B cell (primary cell): ENCODE measurements at regions of chr11 and their contacts with region 1.

Region 1: DNA sequence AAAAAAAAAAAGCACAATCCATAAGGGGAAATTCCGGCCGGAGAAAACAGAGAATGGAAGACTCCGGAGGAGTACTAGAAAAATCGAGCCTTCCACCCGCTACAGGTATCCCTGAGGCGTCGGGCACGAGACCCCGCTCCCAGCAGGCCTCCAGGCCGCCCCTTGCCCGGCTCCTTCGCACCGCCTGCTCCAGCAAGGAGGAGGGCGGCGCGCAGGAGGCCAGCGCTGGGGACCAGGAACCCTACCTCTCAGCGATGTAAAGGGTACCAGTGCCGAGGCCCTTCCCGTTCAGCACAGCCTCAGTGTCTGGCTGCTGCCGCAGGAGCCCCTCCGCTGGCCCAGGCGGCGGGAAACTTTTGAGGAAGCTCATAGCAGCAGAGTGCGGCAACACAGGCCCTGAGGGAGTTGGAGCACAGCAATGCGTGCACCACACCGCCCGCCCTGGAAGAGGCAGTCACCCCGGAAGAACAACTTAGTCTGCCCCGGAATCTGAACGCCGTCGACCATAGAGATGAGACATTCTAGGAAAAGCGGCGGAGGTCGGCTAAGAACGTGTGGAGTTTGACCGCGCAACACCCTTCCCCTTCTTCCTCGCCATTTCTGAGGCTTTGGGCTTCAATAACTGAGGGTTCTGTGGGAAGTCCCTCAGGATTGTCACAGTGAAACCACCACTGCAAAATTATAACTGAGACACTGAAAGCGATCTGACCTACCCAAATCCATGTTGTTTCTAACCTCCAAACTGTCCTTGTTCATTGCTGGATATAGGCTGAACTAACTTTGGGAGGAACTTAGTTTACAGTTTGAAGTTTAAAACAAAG is at the start of gene CLNS1A:
- DNase-seq: peak; percentile 89
- ATAC-seq: peak; percentile 99
- H3K4me3 ChIP-seq: peak within 1 kb of the TSS; percentile 58 to 85 (median 84)
- H3K4me3 Mint-ChIP-seq: peak within 1 kb of the TSS; percentile 98
- H3K27ac ChIP-seq: peak within 1 kb of the TSS; percentile 61 to 78
- H3K27ac Mint-ChIP-seq: peak within 1 kb of the TSS; percentile 96
- H3K4me1 ChIP-seq: peaks cover 17 to 23% of the 10 kb centered on the region in 2 donors
- H3K4me1 Mint-ChIP-seq: peaks cover 36% of the 10 kb centered on the region
- H3K27me3 ChIP-seq: no peaks in the 10 kb centered on the region
- H3K27me3 Mint-ChIP-seq: no peaks in the 10 kb centered on the region
- CTCF ChIP-seq: no peak
- total RNA-seq, gene CLNS1A: 115 and 121 TPM in 2 replicates

Region 2: DNA sequence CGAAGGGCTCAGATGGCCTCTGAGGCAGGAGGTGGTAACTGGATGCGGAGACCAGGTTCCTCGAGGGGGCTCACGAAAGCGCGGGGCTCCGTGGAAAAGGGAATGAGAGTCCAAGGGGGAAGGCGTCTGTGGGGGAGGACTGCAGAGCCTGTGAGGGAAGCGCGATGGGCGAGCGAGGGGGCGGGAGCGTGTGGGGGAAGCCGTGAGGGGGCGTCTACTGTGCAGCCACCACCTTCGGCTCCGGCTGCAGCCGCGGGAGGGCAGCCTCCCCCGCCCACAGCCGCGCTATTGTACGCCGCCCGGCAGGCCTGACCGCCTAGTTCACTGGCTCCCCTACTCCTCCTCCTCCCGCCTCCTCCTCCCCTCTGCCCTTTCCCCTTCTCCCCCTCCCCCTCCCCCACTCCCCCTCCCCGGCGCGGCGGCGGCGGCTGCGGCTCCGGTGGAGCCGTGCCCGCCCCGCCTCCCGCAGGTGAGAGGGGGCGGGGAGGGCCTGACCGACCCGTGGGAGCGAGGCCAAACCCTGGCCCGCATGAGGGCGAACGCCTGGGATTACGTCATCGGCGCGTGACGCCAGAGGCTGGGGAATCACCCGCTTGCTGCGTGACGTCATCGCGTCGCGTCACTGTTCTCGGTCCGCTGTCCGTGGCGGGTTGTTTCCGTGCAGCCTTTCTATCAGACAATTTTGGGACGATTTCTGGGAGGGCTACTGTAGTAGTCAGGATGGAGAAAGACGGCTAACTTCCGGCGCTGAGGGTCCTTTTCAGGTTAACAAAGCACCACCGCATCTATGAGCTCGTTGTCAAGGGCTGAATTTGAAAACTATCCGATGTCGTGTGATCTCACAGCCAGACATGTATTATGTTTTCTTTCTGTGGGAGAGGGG is 163.5 kb before region 1 on chr11 and contains the start of gene PAK1:
- CTCF ChIA-PET with region 1: no interaction called
- POLR2A ChIA-PET with region 1: no interaction called
- intact Hi-C with region 1: loop called (anchors 5 kb)
- DNase-seq: peak; percentile 99
- ATAC-seq: peak; percentile 79
- H3K4me3 ChIP-seq: peak within 1 kb of the TSS; percentile 31 to 74 (median 64)
- H3K4me3 Mint-ChIP-seq: peak within 1 kb of the TSS; percentile 90
- H3K27ac ChIP-seq: peak within 1 kb of the TSS; percentile 61 to 64
- H3K27ac Mint-ChIP-seq: peak within 1 kb of the TSS; percentile 86
- H3K4me1 ChIP-seq: peaks cover 13% of the 10 kb centered on the region in 2 donors
- H3K4me1 Mint-ChIP-seq: peaks cover 17% of the 10 kb centered on the region
- H3K27me3 ChIP-seq: peaks cover 0 to 4% (median 2%) of the 10 kb centered on the region in 4 experiments
- H3K27me3 Mint-ChIP-seq: peaks cover 6% of the 10 kb centered on the region
- CTCF ChIP-seq: peak; percentile 40
- total RNA-seq, gene PAK1: 18.6 and 23.4 TPM in 2 replicates

Region 3: GRCh38 chr11:77820563-77821348 is 183.2 kb after region 1 on chr11 and contains the starts of genes AAMDC and RSF1:
- CTCF ChIA-PET with region 1: no interaction called
- POLR2A ChIA-PET with region 1: no interaction called
- intact Hi-C with region 1: loop called (anchors 1 kb)
- DNase-seq: peak; percentile 98
- ATAC-seq: peak; percentile 83
- H3K4me3 ChIP-seq: peak within 1 kb of the TSS; percentile 77 to 98 (median 94)
- H3K4me3 Mint-ChIP-seq: peak within 1 kb of the TSS; percentile 100
- H3K27ac ChIP-seq: peak within 1 kb of the TSS; percentile 81 to 83
- H3K27ac Mint-ChIP-seq: peak within 1 kb of the TSS; percentile 95
- H3K4me1 ChIP-seq: peaks cover 14 to 26% of the 10 kb centered on the region in 2 donors
- H3K4me1 Mint-ChIP-seq: peaks cover 36% of the 10 kb centered on the region
- H3K27me3 ChIP-seq: no peaks in the 10 kb centered on the region
- H3K27me3 Mint-ChIP-seq: no peaks in the 10 kb centered on the region
- CTCF ChIP-seq: peak; percentile 73
- total RNA-seq, gene AAMDC: 4.6 and 7.5 TPM in 2 replicates
- total RNA-seq, gene RSF1: 100 and 104 TPM in 2 replicates